Activated naive CD4-positive, alpha-beta T cell treated with anti-CD3 and anti-CD28 coated beads for 36 hours (primary cell): ENCODE measurements at regions of chr6 and their contacts with region 1.

Region 1: DNA sequence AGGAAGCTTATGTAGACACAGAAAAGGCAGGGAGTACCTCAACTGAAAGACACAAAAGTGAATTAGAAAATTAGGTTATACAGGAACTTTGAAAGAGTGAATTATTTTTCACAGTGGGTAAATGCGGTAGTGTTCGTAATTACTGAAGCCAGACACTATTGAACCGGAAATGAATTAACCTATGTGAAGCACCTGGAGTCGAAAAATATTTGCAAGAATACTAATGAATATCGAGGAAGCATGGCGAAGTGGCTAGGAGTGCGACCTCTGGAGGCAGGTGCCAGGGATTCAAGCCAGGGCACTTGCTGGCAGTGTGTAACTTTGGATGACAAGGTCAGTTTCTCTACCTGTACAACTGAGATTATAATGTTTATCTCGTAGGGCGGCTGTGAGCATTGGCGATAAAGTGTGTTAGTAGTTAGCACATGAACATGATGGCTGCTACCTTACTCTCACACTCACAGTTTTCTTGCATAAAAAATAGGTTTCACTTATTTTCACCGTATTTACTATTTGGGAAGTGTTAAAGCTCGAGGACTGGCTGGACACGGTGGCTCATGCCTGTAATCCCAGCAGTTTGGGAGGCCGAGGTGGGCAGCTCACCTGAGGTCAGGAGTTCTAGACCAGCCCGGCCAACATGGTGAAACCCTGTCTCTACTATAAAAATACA is 567 bp upstream of the SLC18B1 start:
- DNase-seq: peak; percentile 85
- H3K4me3 Mint-ChIP-seq: no peak overlapping the region
- H3K27ac Mint-ChIP-seq: no peak overlapping the region
- H3K4me1 Mint-ChIP-seq: peaks cover 18% of the 10 kb centered on the region
- H3K27me3 Mint-ChIP-seq: no peaks in the 10 kb centered on the region

Region 2: GRCh38 chr6:132669690-132670291 is 129.2 kb before region 1 on chr6:
- CTCF ChIA-PET with region 1: interaction called, 18 read pairs
- intact Hi-C with region 1: loop called (anchors 1 kb)
- DNase-seq: no peak
- H3K4me3 Mint-ChIP-seq: no peak overlapping the region
- H3K27ac Mint-ChIP-seq: no peak overlapping the region
- H3K4me1 Mint-ChIP-seq: peaks cover 3% of the 10 kb centered on the region
- H3K27me3 Mint-ChIP-seq: no peaks in the 10 kb centered on the region

Region 3: DNA sequence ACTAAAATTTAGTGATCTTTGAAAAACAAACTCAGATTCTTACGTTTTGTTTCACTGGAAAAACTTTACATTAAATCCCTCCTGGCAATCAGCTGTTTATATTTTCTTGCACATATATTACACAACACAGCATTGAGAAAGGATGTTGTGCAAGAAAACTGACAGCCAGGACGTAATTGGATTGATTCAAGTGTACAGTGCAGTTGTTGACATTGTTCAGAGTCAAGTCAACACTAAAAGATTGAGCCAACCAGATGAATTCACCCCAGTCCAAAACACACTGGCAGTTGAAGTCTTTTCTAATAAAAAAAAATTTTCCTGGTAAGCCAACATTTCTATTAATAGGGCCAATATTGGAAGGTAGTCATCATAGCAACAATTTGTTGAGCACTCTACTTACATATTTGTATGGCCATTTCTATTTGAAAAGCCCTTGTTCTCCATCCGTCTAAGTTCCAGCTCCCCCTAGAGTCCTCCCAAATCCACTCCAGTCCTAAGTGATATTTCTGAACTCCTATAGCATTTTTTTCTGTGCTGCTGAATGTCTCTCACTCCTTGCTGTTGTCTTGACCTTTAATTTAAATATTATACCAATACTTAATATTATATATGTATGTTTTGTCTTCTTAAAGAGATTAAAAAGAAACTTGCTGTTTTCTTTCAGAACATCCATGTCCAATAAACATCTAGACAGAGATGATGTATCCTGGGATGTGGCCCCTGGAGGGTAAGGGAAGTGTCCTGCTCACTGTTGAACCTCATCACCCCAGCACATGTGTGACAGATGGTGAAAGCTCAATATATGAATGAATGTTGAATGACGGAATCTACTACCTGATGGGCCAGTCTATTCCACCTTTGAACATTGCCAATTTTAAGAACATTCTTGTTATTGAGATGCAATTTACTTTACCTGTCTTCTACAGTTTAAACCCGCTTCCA is 64.0 kb before region 1 on chr6:
- CTCF ChIA-PET with region 1: no interaction called
- intact Hi-C with region 1: loop called (anchors 1 kb)
- DNase-seq: no peak
- H3K4me3 Mint-ChIP-seq: no peak overlapping the region
- H3K27ac Mint-ChIP-seq: no peak overlapping the region
- H3K4me1 Mint-ChIP-seq: peaks cover 27% of the 10 kb centered on the region
- H3K27me3 Mint-ChIP-seq: no peaks in the 10 kb centered on the region

Region 4: GRCh38 chr6:132788658-132789395 is 10.2 kb before region 1 on chr6:
- CTCF ChIA-PET with region 1: interaction called, 21 read pairs
- intact Hi-C with region 1: loop called (anchors 1 kb)
- DNase-seq: no peak
- H3K4me3 Mint-ChIP-seq: no peak overlapping the region
- H3K27ac Mint-ChIP-seq: peak overlapping the region; percentile 26
- H3K4me1 Mint-ChIP-seq: peaks cover 28% of the 10 kb centered on the region
- H3K27me3 Mint-ChIP-seq: no peaks in the 10 kb centered on the region

Region 5: DNA sequence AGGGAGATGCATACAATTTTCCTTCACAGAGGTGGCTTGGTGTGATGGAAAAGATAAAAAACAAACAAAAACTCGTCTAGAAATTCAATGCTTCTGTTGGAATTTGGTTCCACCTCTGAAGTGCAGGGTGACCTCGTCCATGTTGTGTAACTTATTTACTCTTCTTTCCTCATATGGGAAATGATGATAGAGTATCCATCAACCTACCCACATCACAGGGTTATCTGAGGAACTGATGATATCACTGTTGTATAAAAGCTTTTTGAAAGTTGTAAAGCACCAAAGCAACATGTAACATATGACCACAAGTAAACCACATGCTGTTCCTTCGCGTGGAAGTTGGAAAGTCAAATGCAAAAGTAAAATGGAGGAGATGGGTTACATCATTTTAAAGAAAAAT is 1730.9 kb after region 1 on chr6:
- CTCF ChIA-PET with region 1: no interaction called
- intact Hi-C with region 1: loop called (anchors 10 kb)
- DNase-seq: no peak
- H3K4me3 Mint-ChIP-seq: no peak overlapping the region
- H3K27ac Mint-ChIP-seq: no peak overlapping the region
- H3K4me1 Mint-ChIP-seq: peaks cover 27% of the 10 kb centered on the region
- H3K27me3 Mint-ChIP-seq: no peaks in the 10 kb centered on the region